ENCODE measurements at regions of chr21 and their contacts with region 1.

Region 1: GRCh38 chr21:42314616-42315295 is 453 bp downstream of the TFF3 start:
- DNase-seq: no peak
- H3K4me3 ChIP-seq: no peak overlapping the region
- H3K27ac ChIP-seq: no peak overlapping the region
- H3K27me3 ChIP-seq: peaks cover 14% of the 10 kb centered on the region
- CTCF ChIP-seq: no peak

Region 2: DNA sequence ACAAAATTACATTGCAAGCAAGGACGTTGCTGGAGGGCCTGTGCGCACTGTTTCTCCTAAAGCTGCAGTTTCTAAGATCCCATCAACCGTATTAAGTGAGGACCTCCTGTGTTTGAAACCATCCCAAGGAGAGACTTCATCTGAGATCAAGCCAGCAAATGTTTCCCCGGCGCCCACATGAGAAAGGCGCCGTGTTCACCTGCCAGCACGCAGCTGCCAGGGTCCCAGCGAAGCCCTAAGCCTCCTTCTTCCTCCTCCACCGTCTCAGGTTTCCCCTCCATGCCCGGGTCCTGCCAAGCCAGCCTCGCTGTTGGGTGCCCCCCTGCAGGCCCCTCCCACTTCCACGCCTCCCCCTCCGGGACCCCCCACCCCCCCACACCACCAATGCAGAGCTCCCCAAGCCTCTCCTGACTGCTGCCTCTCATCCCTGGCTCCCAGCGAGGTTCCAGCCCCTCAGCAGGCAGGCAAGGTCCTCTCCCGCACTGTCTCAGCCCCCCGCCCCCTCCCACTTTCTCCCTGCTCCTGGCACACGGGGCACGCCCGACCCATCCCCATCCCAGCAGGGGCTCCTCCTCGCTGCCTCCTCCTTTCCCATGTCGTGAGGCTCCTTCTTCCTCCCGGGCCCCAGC is 60.2 kb after region 1 on chr21:
- CTCF ChIA-PET with region 1: no interaction called
- POLR2A ChIA-PET with region 1: interaction called, 10 read pairs
- DNase-seq: no peak
- H3K4me3 ChIP-seq: no peak overlapping the region
- H3K27ac ChIP-seq: no peak overlapping the region
- H3K27me3 ChIP-seq: no peaks in the 10 kb centered on the region
- CTCF ChIP-seq: no peak

Measured in AG04450 (cell line).